ENCODE measurements at regions of chr7 and their contacts with region 1.

Region 1: GRCh38 chr7:104883718-104884452 is 130.1 kb upstream of the KMT2E start:
- DNase-seq: peak; percentile 39
- H3K4me3 ChIP-seq: no peak overlapping the region
- H3K27ac ChIP-seq: no peak overlapping the region
- H3K27me3 ChIP-seq: peaks cover 11% of the 10 kb centered on the region
- CTCF ChIP-seq: peak; percentile 97

Region 2: DNA sequence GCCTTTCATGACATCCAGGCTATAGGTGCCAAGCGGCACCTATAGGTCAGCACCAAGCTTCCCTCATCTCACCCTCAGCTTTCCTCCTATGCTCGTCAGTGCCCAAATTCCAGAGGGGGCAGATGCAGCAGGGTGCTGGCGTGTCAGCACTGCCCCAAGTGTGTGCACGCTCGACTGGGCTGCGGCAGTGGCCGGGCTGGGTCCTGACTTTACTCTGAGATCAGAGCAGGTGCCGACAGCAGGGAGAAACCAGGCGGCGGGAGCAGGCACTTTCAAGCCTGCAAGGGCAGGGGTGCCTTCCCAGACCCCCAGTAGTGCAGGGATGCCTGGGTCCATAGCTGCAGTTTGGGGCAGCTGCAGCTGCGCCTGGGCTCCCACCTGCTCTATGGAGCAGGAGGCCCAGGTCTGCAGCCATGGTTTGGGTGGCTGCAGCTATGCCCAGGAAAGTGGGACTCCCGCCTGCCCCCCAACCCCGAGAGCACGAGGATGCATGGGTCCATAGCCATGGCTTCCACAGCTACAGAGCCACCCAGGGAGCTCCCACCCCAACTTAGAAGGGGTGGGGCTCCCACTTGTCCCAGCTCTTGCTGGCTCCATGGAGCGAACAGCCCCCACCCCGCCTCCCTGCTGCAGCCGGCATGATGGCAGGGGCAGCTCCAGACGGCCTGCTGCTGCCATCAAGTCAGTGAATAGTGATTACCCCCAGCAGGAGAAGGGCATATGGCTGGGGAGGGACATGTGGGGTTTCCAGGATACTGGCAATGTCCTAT is 69.1 kb before region 1 on chr7:
- CTCF ChIA-PET with region 1: no interaction called
- POLR2A ChIA-PET with region 1: no interaction called
- DNase-seq: no peak
- H3K4me3 ChIP-seq: no peak overlapping the region
- H3K27ac ChIP-seq: no peak overlapping the region
- H3K27me3 ChIP-seq: no peaks in the 10 kb centered on the region
- CTCF ChIP-seq: no peak

Region 3: GRCh38 chr7:104862719-104863118 is 21.2 kb before region 1 on chr7:
- CTCF ChIA-PET with region 1: interaction called, 13 read pairs
- POLR2A ChIA-PET with region 1: no interaction called
- DNase-seq: no peak
- H3K4me3 ChIP-seq: no peak overlapping the region
- H3K27ac ChIP-seq: no peak overlapping the region
- H3K27me3 ChIP-seq: peaks cover 5% of the 10 kb centered on the region
- CTCF ChIP-seq: 0 out of 2 replicates have a peak, but pooled peaks have one; percentile 20

Region 4: GRCh38 chr7:104895522-104896236 is 11.8 kb after region 1 on chr7:
- CTCF ChIA-PET with region 1: interaction called, 68 read pairs
- POLR2A ChIA-PET with region 1: no interaction called
- DNase-seq: no peak
- H3K4me3 ChIP-seq: no peak overlapping the region
- H3K27ac ChIP-seq: no peak overlapping the region
- H3K27me3 ChIP-seq: peaks cover 17% of the 10 kb centered on the region
- CTCF ChIP-seq: no peak

Region 5: DNA sequence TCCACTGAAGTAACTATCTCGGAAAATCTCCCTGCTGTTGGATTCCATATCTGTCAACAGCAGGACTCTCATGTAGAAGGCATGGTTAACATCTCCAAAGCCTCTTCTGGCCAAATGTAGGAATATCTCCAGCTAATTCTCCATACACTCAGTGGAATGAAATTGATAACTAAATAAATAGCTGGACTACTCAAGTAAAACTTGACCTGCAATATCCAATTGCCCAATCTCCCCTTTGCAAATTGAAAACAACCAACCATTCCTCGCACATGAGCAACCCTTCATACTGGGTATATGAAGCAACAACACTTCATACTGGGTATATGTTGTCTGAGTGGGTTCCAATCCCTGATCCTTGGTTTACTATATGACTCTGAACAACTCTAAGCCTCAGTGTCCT is 24.8 kb after region 1 on chr7:
- CTCF ChIA-PET with region 1: interaction called, 311 read pairs
- POLR2A ChIA-PET with region 1: no interaction called
- DNase-seq: no peak
- H3K4me3 ChIP-seq: no peak overlapping the region
- H3K27ac ChIP-seq: no peak overlapping the region
- H3K27me3 ChIP-seq: peaks cover 10% of the 10 kb centered on the region
- CTCF ChIP-seq: no peak

Region 6: GRCh38 chr7:104983578-104984539 is 100.0 kb after region 1 on chr7:
- CTCF ChIA-PET with region 1: interaction called, 21 read pairs
- POLR2A ChIA-PET with region 1: no interaction called
- DNase-seq: no peak
- H3K4me3 ChIP-seq: peak overlapping the region; percentile 70
- H3K27ac ChIP-seq: peak overlapping the region; percentile 97
- H3K27me3 ChIP-seq: no peaks in the 10 kb centered on the region
- CTCF ChIP-seq: peak; percentile 58